Mammary epithelial cell (primary cell): ENCODE measurements at regions of chr10 and their contacts with region 1.

Region 1: GRCh38 chr10:66747451-66747850 is 178.4 kb upstream of the LRRTM3 start:
- DNase-seq: peak; percentile 94
- H3K4me3 ChIP-seq: no peak overlapping the region
- H3K27ac ChIP-seq: peak overlapping the region; percentile 91
- H3K4me1 ChIP-seq: peaks cover 20% of the 10 kb centered on the region
- H3K27me3 ChIP-seq: no peaks in the 10 kb centered on the region
- CTCF ChIP-seq: no peak

Region 2: GRCh38 chr10:66455304-66455703 is 292.1 kb before region 1 on chr10:
- CTCF ChIA-PET with region 1: no interaction called
- dilution Hi-C with region 1: no loop called
- in situ Hi-C with region 1: no loop called
- intact Hi-C with region 1: loop called (anchors 1 kb)
- DNase-seq: peak; percentile 2
- H3K4me3 ChIP-seq: no peak overlapping the region
- H3K27ac ChIP-seq: no peak overlapping the region
- H3K4me1 ChIP-seq: no peaks in the 10 kb centered on the region
- H3K27me3 ChIP-seq: peaks cover 1% of the 10 kb centered on the region
- CTCF ChIP-seq: peak; percentile 30 to 63

Region 3: DNA sequence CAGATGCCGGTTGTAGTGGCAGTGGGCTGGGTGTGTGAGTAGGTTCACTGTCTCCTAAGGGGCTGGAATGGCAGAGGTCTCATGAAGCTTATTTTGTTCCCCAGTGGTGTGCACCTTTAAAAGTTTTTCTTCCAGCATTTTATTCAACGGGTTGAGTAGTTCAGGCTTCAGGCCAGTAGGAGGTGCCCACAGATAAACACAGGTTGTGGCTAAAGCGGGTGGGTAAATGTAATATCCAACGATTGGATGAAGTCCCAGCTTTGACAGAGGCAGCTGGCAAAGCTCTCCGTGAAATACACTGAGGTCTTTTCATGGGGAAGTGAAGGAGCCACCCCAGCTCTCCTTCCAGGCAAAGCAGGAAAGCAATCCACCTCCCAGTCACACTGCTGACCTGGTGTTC is 161.4 kb before region 1 on chr10:
- CTCF ChIA-PET with region 1: interaction called, 3 read pairs
- dilution Hi-C with region 1: no loop called
- in situ Hi-C with region 1: no loop called
- intact Hi-C with region 1: loop called (anchors 5 kb)
- DNase-seq: peak; percentile 19
- H3K4me3 ChIP-seq: no peak overlapping the region
- H3K27ac ChIP-seq: no peak overlapping the region
- H3K4me1 ChIP-seq: no peaks in the 10 kb centered on the region
- H3K27me3 ChIP-seq: peaks cover 2% of the 10 kb centered on the region
- CTCF ChIP-seq: peak; percentile 48 to 55

Region 4: DNA sequence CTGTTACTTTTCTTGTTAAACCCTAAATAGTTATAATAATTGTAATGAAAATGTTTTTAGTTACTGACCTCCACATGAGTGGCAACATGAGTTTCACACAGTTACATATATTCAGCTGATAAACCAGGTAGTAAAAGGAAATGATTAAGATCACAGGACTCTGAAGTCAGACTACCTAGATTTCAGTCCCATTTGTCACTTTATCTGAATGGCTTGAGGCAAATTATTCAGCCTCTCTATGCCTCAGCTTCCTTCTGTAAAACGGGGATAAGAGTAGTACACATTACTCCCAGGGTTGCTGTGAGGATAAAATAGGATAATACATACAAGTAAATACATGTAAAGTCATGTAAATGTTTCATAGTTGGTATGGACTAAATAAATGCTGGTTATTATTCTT is 75.9 kb before region 1 on chr10:
- CTCF ChIA-PET with region 1: no interaction called
- dilution Hi-C with region 1: no loop called
- in situ Hi-C with region 1: no loop called
- intact Hi-C with region 1: loop called (anchors 1 kb)
- DNase-seq: peak; percentile 67
- H3K4me3 ChIP-seq: no peak overlapping the region
- H3K27ac ChIP-seq: peak overlapping the region; percentile 26
- H3K4me1 ChIP-seq: peaks cover 5% of the 10 kb centered on the region
- H3K27me3 ChIP-seq: no peaks in the 10 kb centered on the region
- CTCF ChIP-seq: no peak

Region 5: DNA sequence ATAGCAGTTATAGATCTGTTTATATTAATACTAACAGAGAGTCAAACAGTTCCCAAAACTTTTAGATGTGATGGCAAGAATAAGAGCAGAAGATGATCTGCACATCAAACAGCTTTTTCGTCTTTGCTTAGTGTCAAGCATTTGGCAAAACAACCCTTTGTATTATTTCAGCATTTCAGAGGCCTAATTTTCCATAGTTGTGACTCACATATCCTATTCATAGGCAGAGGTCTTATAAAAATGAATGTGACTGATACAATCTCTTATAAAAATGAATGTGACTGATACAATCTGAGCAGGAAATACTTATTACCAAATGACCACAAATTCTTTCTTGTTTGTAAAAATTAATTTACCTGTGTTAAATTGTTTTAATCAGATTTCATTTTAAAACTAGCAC is 249.6 kb after region 1 on chr10:
- CTCF ChIA-PET with region 1: no interaction called
- dilution Hi-C with region 1: no loop called
- in situ Hi-C with region 1: no loop called
- intact Hi-C with region 1: no loop called
- DNase-seq: peak; percentile 16
- H3K4me3 ChIP-seq: no peak overlapping the region
- H3K27ac ChIP-seq: no peak overlapping the region
- H3K4me1 ChIP-seq: no peaks in the 10 kb centered on the region
- H3K27me3 ChIP-seq: no peaks in the 10 kb centered on the region
- CTCF ChIP-seq: no peak